AG04449 (cell line): ENCODE measurements at regions of chr7 and their contacts with region 1.

Region 1: DNA sequence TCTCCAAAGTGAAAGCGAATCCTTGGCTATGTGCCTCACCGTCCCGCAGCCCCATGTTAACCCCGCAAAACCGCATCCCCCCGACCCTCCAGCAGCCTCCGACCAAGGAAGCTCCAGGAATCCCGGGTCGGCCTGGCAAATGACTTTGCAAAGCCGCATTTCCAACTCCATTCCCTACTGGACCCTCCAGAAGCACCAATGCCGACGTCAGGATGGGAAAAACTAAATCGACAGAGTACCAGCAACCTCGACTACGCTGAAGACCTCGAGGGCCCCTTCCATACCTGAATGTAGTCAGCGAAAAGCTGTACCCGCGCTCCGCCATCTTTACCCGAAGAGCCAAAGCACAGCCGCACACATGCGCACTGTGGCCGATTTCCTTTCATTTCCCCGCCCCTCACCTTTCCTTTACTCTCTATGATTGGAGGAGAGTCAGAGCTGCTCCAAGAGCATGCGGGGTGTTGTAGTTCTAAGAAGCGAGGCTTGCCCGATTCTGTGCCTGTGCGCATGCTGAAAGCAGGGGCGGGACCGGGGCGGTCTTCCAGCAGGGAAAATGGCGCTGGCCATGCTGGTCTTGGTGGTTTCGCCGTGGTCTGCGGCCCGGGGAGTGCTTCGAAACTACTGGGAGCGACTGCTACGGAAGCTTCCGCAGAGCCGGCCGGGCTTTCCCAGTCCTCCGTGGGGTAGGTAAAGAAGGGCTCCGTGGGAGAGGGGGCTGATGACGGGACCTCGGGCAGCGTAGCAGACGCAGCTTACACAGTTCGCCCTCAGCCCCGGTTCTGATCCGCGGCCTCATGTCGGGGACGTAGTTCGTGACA is at the starts of genes MRPL32 and PSMA2:
- DNase-seq: peak; percentile 85
- H3K4me3 ChIP-seq: peak within 1 kb of the TSS; percentile 87
- CTCF ChIP-seq: no peak

Region 2: DNA sequence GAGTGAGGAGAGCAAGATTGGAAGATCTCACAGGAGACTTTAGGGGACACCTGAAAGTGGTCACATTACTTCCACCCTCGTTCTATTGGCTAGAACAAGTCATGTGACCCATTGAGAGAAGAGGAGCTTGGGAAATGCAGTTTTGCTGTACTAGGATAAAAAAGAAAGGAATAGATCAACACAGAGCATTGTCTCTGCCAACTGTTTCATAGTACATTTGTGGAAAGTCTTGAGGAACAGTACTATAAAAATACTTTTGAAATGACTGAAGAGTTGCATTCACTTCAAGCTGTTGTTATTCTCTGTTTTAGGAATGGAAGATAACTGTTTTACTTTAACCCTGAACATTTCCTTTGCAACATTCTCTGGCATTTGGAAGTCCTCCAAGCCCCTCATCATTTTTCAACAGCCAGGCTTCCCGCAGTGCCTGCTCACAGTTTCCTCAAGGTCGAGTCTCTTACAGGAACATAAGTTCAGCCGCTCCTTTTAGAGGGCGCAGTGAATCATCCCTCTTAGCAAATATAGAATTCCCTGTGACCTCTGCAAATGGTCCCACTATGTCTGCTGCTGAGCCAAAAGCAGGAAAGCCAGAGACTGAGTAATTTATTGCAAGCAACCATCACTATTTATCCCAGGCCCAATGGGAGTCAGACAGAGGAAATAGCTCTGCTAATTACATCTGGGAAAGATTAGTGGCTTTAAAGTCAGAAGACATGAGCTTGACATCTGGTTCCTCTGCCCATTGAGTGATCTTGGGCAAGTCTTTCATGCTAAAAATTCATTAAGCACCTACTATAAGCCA is 40.9 kb after region 1 on chr7:
- CTCF ChIA-PET with region 1: no interaction called
- POLR2A ChIA-PET with region 1: interaction called, 10 read pairs
- DNase-seq: peak; percentile 96
- H3K4me3 ChIP-seq: no peak overlapping the region
- CTCF ChIP-seq: no peak